Endothelial cell of umbilical vein (primary cell): ENCODE measurements at regions of chr17 and their contacts with region 1.

Region 1: GRCh38 chr17:30291543-30292285 is at the start of gene BLMH:
- DNase-seq: peak; percentile 86
- H3K4me3 ChIP-seq: peak within 1 kb of the TSS; percentile 23 to 86 (median 74)
- H3K27ac ChIP-seq: peak within 1 kb of the TSS; percentile 81
- H3K4me1 ChIP-seq: peaks cover 15% of the 10 kb centered on the region
- H3K27me3 ChIP-seq: peaks cover 0 to 2% of the 10 kb centered on the region in 2 experiments
- CTCF ChIP-seq: no peak
- POLR2A ChIP-seq: peak; percentile 94
- total RNA-seq, gene BLMH: 65.8 and 75.0 TPM in 2 replicates

Region 2: GRCh38 chr17:30336369-30337171 is 44.9 kb after region 1 on chr17:
- CTCF ChIA-PET with region 1: interaction called, 12 read pairs
- POLR2A ChIA-PET with region 1: interaction called, 4 read pairs
- dilution Hi-C with region 1: no loop called
- intact Hi-C with region 1: loop called (anchors 2 kb)
- DNase-seq: peak; percentile 64
- H3K4me3 ChIP-seq: no peak overlapping the region
- H3K27ac ChIP-seq: no peak overlapping the region
- H3K4me1 ChIP-seq: peaks cover 18% of the 10 kb centered on the region
- H3K27me3 ChIP-seq: no peaks in the 10 kb centered on the region
- CTCF ChIP-seq: peak; percentile 42 to 56
- POLR2A ChIP-seq: no peak

Region 3: GRCh38 chr17:30378824-30379302 is 87.1 kb after region 1 on chr17 and contains the start of gene CPD:
- CTCF ChIA-PET with region 1: interaction called, 4 read pairs
- POLR2A ChIA-PET with region 1: no interaction called
- dilution Hi-C with region 1: no loop called
- intact Hi-C with region 1: loop called (anchors 1 kb)
- DNase-seq: peak; percentile 95
- H3K4me3 ChIP-seq: peak within 1 kb of the TSS; percentile 71 to 92 (median 86)
- H3K27ac ChIP-seq: peak within 1 kb of the TSS; percentile 32
- H3K4me1 ChIP-seq: peaks cover 23% of the 10 kb centered on the region
- H3K27me3 ChIP-seq: peaks cover 2 to 3% of the 10 kb centered on the region in 2 experiments
- CTCF ChIP-seq: no peak
- POLR2A ChIP-seq: peak; percentile 97
- total RNA-seq, gene CPD: 63.6 and 68.0 TPM in 2 replicates

Region 4: GRCh38 chr17:30586818-30587595 is 295.3 kb after region 1 on chr17:
- CTCF ChIA-PET with region 1: no interaction called
- POLR2A ChIA-PET with region 1: no interaction called
- dilution Hi-C with region 1: no loop called
- intact Hi-C with region 1: no loop called
- DNase-seq: peak; percentile 62
- H3K4me3 ChIP-seq: no peak overlapping the region
- H3K27ac ChIP-seq: no peak overlapping the region
- H3K4me1 ChIP-seq: peaks cover 9% of the 10 kb centered on the region
- H3K27me3 ChIP-seq: no peaks in the 10 kb centered on the region
- CTCF ChIP-seq: no peak
- POLR2A ChIP-seq: no peak